CD4-positive, alpha-beta T cell (primary cell): ENCODE measurements at regions of chr4 and their contacts with region 1.

Region 1: GRCh38 chr4:37826295-37827029 is at the start of gene PGM2:
- DNase-seq: peak; percentile 79 to 94 (median 88)
- ATAC-seq: peak; percentile 98
- H3K4me3 ChIP-seq: peak within 1 kb of the TSS; percentile 98
- H3K4me3 Mint-ChIP-seq: peak within 1 kb of the TSS; percentile 91
- H3K27ac ChIP-seq: peak within 1 kb of the TSS; percentile 35 to 63
- H3K27ac Mint-ChIP-seq: peak within 1 kb of the TSS; percentile 91
- H3K4me1 ChIP-seq: peaks cover 27% of the 10 kb centered on the region
- H3K4me1 Mint-ChIP-seq: peaks cover 73% of the 10 kb centered on the region
- H3K27me3 ChIP-seq: no peaks in the 10 kb centered on the region
- H3K27me3 Mint-ChIP-seq: no peaks in the 10 kb centered on the region
- CTCF ChIP-seq: no peak
- total RNA-seq, gene PGM2: 10.7 to 11.8 TPM

Region 2: DNA sequence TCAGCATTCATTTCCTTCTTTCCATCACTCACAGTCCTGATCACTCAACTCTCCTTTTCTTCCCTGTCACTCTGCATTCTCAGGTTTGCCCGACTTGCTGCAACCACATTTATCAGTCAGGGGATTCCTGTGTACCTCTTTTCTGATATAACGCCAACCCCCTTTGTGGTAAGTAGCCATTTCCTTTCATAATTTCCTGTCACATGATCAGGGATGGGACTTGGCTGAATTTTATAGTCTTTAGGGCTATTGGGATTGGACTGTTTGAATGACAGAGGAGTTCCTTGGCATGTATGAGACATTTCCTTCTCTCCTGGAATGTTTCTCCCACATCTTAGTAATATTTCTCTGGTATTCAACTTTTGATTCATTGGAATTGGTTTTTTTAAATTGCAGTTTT is 11.0 kb after region 1 on chr4:
- CTCF ChIA-PET with region 1: no interaction called
- POLR2A ChIA-PET with region 1: interaction called, 21 read pairs
- intact Hi-C with region 1: no loop called
- DNase-seq: peak in 2 of 14 experiments; percentile 10 to 39
- ATAC-seq: no peak
- H3K4me3 ChIP-seq: no peak overlapping the region
- H3K4me3 Mint-ChIP-seq: no peak overlapping the region
- H3K27ac ChIP-seq: no peak overlapping the region
- H3K27ac Mint-ChIP-seq: no peak overlapping the region
- H3K4me1 ChIP-seq: peaks cover 8% of the 10 kb centered on the region
- H3K4me1 Mint-ChIP-seq: peaks cover 38% of the 10 kb centered on the region
- H3K27me3 ChIP-seq: no peaks in the 10 kb centered on the region
- H3K27me3 Mint-ChIP-seq: no peaks in the 10 kb centered on the region
- CTCF ChIP-seq: no peak

Region 3: DNA sequence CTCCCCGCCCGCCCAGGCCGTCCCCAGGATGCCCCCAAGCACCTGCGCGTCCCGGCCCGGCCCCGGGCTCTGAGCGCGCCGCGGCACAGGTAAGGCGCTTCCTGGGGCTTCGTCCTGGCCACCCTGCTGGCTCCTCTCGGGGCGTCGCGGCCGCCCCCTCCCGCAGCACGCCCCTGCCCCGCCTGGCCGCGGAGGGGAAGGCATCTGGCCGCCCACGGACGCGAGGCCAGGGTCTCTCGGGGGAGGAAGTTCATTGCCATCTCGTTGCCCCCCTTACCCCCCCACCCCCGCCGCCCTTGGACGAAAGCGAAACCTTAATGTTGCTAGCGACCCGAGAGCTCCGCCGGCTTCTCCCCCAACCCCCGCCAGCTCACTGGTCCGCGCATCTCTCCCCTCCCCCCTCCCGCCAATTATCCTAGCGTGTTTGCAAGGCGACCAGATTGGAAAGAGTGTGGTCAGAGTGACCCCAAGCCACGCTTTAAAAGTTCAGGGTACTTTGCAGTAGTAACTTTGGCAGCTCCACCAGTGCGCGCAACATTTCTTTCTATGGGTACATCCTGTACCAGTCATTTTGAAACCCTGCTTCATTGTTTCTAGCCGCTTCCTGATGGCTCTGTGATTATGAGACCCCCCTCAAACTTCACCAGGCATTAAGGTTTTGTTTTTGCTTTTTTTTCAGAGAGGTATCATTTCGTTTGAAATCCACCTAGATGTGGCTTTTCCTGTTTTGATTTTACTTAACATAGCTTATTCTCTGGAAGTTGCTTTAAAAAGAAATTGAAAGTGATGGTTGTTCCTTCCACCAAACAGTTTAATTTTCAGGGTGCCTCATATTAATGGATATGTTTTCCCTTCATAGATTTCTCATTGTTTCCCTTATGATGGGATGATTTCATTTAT is 65.0 kb after region 1 on chr4:
- CTCF ChIA-PET with region 1: no interaction called
- POLR2A ChIA-PET with region 1: interaction called, 33 read pairs
- intact Hi-C with region 1: loop called (anchors 1 to 2 kb)
- DNase-seq: peak in 13 of 14 experiments; percentile 13 to 76 (median 41)
- ATAC-seq: peak; percentile 63
- H3K4me3 ChIP-seq: peak overlapping the region; percentile 59
- H3K4me3 Mint-ChIP-seq: peak overlapping the region; percentile 97
- H3K27ac ChIP-seq: peak overlapping the region; percentile 20 to 66
- H3K27ac Mint-ChIP-seq: peak overlapping the region; percentile 94
- H3K4me1 ChIP-seq: peaks cover 40% of the 10 kb centered on the region
- H3K4me1 Mint-ChIP-seq: peaks cover 48% of the 10 kb centered on the region
- H3K27me3 ChIP-seq: no peaks in the 10 kb centered on the region
- H3K27me3 Mint-ChIP-seq: no peaks in the 10 kb centered on the region
- CTCF ChIP-seq: no peak

Region 4: DNA sequence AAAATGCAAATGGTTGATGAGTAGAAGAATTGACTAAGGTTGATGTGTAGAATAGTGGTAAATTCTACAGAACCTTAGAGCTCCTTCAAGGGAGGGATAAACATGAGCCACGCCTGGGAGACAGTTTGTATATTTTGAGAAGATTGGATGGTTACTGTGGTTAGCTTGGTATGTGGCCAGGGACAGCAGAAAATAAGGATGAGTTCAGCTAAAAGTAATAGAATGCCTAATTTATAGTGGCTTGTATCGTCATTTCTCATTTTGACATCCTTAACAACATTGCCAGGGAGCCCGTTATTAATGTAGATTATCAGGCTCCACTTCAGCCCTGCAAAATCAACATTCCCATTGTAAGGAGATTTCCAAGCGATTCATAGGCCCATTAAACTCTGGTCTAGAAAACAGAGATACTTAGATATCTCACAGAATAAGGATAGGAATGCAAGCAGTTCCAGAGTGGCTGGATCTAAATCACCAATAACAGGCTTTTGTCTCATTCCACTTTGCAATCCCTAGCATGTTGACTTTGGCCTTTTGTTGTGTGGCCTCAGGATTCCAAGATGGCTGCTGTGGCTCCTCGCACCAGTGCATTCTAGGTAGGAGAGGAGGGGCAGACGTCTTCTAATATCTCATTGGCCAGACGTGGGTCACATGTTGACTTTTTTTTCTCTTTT is 127.3 kb after region 1 on chr4:
- CTCF ChIA-PET with region 1: no interaction called
- POLR2A ChIA-PET with region 1: no interaction called
- intact Hi-C with region 1: no loop called
- DNase-seq: no peak
- ATAC-seq: peak; percentile 36
- H3K4me3 ChIP-seq: no peak overlapping the region
- H3K4me3 Mint-ChIP-seq: no peak overlapping the region
- H3K27ac ChIP-seq: no peak overlapping the region
- H3K27ac Mint-ChIP-seq: peak overlapping the region; percentile 67
- H3K4me1 ChIP-seq: no peaks in the 10 kb centered on the region
- H3K4me1 Mint-ChIP-seq: peaks cover 21% of the 10 kb centered on the region
- H3K27me3 ChIP-seq: no peaks in the 10 kb centered on the region
- H3K27me3 Mint-ChIP-seq: no peaks in the 10 kb centered on the region
- CTCF ChIP-seq: no peak

Region 5: GRCh38 chr4:38650133-38650532 is 823.7 kb after region 1 on chr4:
- CTCF ChIA-PET with region 1: no interaction called
- POLR2A ChIA-PET with region 1: no interaction called
- intact Hi-C with region 1: no loop called
- DNase-seq: no peak
- ATAC-seq: no peak
- H3K4me3 ChIP-seq: no peak overlapping the region
- H3K4me3 Mint-ChIP-seq: no peak overlapping the region
- H3K27ac ChIP-seq: no peak overlapping the region
- H3K27ac Mint-ChIP-seq: no peak overlapping the region
- H3K4me1 ChIP-seq: peaks cover 24% of the 10 kb centered on the region
- H3K4me1 Mint-ChIP-seq: peaks cover 40% of the 10 kb centered on the region
- H3K27me3 ChIP-seq: no peaks in the 10 kb centered on the region
- H3K27me3 Mint-ChIP-seq: no peaks in the 10 kb centered on the region
- CTCF ChIP-seq: no peak